Activated CD8-positive, alpha-beta T cell treated with anti-CD3 and anti-CD28 coated beads for 36 hours (primary cell): ENCODE measurements at regions of chr2 and their contacts with region 1.

Region 1: GRCh38 chr2:241149925-241150659 is at the start of gene PPP1R7:
- DNase-seq: peak; percentile 97
- ATAC-seq: peak; percentile 85
- H3K4me3 Mint-ChIP-seq: peak within 1 kb of the TSS; percentile 86
- H3K27ac Mint-ChIP-seq: peak within 1 kb of the TSS; percentile 90
- H3K4me1 Mint-ChIP-seq: peaks cover 50% of the 10 kb centered on the region
- H3K27me3 Mint-ChIP-seq: no peaks in the 10 kb centered on the region
- CTCF ChIP-seq: no peak
- total RNA-seq, gene PPP1R7: 82.9 to 88.7 TPM

Region 2: GRCh38 chr2:241081643-241082340 is 68.3 kb before region 1 on chr2:
- CTCF ChIA-PET with region 1: interaction called, 30 read pairs
- POLR2A ChIA-PET with region 1: interaction called, 4 read pairs
- intact Hi-C with region 1: loop called (anchors 10 kb)
- DNase-seq: no peak
- ATAC-seq: no peak
- H3K4me3 Mint-ChIP-seq: no peak overlapping the region
- H3K27ac Mint-ChIP-seq: peak overlapping the region; percentile 55
- H3K4me1 Mint-ChIP-seq: peaks cover 7% of the 10 kb centered on the region
- H3K27me3 Mint-ChIP-seq: no peaks in the 10 kb centered on the region
- CTCF ChIP-seq: no peak

Region 3: GRCh38 chr2:241087420-241088268 is 62.4 kb before region 1 on chr2:
- CTCF ChIA-PET with region 1: interaction called, 4 read pairs
- POLR2A ChIA-PET with region 1: interaction called, 3 read pairs
- intact Hi-C with region 1: loop called (anchors 10 kb)
- DNase-seq: no peak
- ATAC-seq: no peak
- H3K4me3 Mint-ChIP-seq: no peak overlapping the region
- H3K27ac Mint-ChIP-seq: no peak overlapping the region
- H3K4me1 Mint-ChIP-seq: peaks cover 18% of the 10 kb centered on the region
- H3K27me3 Mint-ChIP-seq: no peaks in the 10 kb centered on the region
- CTCF ChIP-seq: no peak

Region 4: DNA sequence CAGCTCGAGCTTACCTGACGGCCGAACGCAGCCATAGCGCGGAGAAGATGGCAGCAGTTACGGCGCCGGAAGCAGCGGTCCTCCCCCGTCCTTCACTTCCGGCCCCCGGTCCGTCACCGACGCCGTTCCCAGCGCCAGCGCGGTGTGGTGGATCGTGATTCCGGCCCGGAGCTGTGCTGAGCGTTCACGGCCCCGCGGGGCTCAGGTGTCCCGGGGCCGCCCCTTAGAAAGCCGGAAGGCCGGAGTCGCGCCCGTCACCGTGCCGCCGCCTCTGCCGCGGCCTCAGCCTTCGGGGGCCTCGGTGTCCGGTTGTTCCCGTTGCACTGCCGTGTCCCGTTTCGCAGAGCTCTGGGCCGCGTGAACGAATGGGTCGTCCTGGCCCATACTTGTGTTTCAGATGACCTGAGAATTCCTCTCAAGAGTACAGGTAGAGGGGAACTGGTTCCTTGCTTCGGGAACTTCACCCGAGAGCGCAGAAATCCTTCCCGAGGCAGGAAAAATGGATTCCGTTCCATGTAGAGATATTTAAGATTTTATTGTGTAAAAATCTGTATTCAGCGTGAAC is 47.8 kb before region 1 on chr2 and contains the start of gene MTERF4:
- CTCF ChIA-PET with region 1: interaction called, 3 read pairs
- POLR2A ChIA-PET with region 1: interaction called, 24 read pairs
- intact Hi-C with region 1: loop called (anchors 5 kb)
- DNase-seq: peak; percentile 90
- ATAC-seq: peak; percentile 95
- H3K4me3 Mint-ChIP-seq: peak within 1 kb of the TSS; percentile 97
- H3K27ac Mint-ChIP-seq: peak within 1 kb of the TSS; percentile 99
- H3K4me1 Mint-ChIP-seq: peaks cover 56% of the 10 kb centered on the region
- H3K27me3 Mint-ChIP-seq: no peaks in the 10 kb centered on the region
- CTCF ChIP-seq: no peak
- total RNA-seq, gene MTERF4: 33.2 to 36.6 TPM

Region 5: DNA sequence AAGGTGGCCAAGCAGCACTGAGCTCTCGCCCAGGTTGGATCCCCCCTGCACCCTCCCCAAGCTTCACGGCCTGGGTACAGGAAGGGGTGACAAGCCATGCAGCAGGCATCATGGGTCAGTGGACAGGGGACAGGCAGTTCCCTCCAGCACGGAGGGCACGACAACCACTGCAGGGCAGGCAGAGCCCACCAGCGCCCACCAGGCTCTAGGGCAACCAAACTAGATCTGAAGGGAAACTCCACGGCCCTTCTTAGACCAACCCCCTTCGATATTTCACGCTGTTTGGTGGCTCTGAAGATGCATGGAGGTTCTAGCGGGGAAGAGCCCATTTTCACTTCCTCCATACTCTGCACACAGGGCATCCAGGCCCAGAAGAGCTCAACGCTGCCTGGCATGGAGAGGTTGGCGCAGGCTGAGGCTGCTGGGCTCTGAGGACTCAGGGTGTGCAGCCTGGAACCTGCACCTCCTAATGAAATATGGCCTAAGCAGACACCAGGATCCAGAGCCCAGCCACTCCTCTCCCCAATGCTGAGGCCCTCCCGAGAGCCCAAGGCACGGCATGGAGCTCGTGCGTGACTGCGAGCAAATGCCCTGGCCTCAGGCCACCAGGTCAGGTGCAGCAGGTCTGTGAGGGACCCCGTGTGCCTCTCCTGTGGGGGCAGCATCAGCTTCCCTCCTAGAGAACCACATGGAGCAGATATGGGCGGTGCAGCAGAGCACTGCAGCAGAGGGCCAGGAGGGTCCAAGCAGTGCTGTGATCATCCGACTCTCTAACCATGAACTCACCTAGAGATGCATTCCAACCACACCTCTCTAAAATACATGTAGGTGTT is 39.3 kb before region 1 on chr2:
- CTCF ChIA-PET with region 1: interaction called, 4 read pairs
- POLR2A ChIA-PET with region 1: interaction called, 11 read pairs
- intact Hi-C with region 1: loop called (anchors 5 kb)
- DNase-seq: peak; percentile 42
- ATAC-seq: peak; percentile 50
- H3K4me3 Mint-ChIP-seq: peak overlapping the region; percentile 81
- H3K27ac Mint-ChIP-seq: peak overlapping the region; percentile 93
- H3K4me1 Mint-ChIP-seq: peaks cover 50% of the 10 kb centered on the region
- H3K27me3 Mint-ChIP-seq: no peaks in the 10 kb centered on the region
- CTCF ChIP-seq: no peak

Region 6: DNA sequence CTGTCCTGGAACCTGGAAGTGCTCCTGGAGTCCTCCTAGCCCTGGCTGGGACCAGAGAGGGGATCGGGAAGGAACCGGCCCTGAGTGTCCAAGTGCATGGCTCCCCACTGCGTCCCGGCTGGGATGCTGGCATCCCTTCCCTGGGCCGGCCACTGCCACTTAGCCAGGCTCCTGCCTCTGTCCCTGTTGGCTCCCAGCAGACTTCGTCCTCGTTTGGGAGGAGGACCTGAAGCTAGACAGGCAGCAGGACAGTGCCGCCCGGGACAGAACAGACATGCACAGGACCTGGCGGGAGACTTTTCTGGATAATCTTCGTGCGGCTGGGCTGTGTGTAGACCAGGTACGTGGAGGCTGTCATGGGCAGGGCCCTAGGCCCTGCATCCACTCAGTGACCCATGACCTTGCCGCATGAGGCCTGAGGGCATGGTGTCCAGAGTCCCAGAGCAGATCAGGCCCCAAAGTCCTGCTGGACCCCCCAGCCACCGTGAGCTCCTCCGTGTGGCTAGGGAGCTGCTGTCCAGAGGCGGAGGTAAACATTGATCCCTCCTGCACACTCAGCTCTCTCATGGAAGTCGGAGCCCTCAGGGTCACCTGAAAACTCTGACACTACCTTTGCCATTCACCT is 45.5 kb after region 1 on chr2:
- CTCF ChIA-PET with region 1: no interaction called
- POLR2A ChIA-PET with region 1: no interaction called
- intact Hi-C with region 1: no loop called
- DNase-seq: no peak
- ATAC-seq: no peak
- H3K4me3 Mint-ChIP-seq: no peak overlapping the region
- H3K27ac Mint-ChIP-seq: no peak overlapping the region
- H3K4me1 Mint-ChIP-seq: no peaks in the 10 kb centered on the region
- H3K27me3 Mint-ChIP-seq: no peaks in the 10 kb centered on the region
- CTCF ChIP-seq: no peak